ENCODE measurements at regions of chr3 and their contacts with region 1.

Region 1: DNA sequence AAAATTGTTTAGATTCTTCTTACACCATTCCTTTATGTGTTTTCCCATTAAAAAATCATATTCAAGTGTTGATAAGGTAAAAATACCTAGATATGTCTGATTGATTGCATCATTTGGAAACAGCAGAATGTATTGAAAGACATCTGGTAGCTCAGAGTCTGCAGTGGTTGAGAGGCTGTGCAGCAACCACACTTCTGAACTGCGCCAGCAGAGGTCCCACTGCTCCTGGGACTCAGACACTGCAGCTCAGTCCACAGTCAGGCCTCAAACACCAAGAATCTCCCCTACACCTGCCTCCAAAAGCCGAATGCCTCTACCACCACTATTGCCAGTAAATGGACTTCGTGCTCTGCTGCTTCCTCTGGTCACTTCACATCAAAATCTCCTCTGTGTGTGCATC is 176.9 kb upstream of the LMCD1 start:
- DNase-seq: no peak
- ATAC-seq: peak; percentile 71

Region 2: DNA sequence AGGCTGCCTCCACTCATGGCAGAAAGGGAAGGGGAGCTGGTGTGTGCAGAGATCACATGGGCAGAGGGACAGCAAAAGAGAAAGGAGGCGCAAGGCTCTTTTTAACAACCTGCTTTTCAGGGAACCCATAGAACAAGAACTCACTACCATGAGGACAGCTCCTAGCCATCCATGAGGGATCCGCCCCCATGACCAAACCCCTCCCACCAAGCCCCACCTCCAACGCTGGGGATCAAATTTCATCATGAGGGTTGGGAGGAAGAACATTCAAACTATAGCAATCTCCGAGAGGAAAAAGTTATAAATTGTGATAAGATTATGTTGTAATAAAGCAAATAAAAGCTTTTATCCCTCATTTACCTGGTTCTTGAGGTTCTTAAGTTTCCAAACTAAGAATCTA is 92.2 kb after region 1 on chr3:
- intact Hi-C with region 1: loop called (anchors 2 kb)
- DNase-seq: no peak
- ATAC-seq: no peak

Region 3: GRCh38 chr3:8458711-8459110 is 134.0 kb after region 1 on chr3:
- intact Hi-C with region 1: no loop called
- DNase-seq: no peak
- ATAC-seq: no peak

Measured in Right ventricle myocardium inferior (tissue), 1 donor.